Transverse colon (tissue), 4 donors: ENCODE measurements at regions of chr16 and their contacts with region 1.

Region 1: DNA sequence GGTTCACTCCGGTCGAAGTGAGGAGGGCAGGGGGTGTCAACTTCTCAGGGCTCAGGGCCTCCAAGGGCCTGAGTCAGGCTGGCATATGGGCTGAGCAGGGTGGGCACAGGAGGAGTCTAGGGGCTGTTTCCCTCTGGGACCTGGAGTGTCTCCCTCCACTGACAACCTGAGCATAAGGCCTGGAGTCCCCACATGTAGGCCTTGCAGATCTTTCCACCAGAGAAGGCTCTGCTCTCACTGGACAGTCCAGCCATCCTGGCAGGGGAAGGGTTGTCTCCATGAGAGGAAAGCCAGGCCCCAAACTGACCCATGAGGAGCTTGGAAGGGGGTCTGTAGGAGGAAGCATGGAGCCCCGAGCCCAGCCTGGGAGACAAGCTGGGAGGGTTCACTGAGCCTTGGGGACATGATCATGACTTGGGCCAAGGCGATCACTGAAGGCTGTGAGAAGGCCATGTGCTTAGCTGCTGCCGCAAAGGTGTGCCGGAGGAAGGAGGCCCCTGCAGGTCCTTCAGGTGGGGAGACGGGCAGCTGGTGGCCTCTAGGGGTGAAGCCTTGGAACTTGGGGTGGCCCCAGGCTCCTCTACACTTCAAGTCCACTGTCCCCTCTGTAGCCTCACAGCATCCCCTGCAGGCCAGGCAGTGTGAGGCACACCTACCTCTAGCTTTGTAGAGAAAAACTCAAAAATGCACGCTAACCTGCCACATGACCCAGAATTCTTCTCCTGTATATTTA is 9.9 kb downstream of the CMTM2 start:
- DNase-seq: peak; percentile 56
- H3K4me3 ChIP-seq: no peak overlapping the region
- H3K27ac ChIP-seq: no peak overlapping the region
- H3K4me1 ChIP-seq: no peaks in the 10 kb centered on the region
- H3K27me3 ChIP-seq: no peaks in the 10 kb centered on the region
- CTCF ChIP-seq: peak; percentile 35 to 56 (median 45)
- EP300 ChIP-seq: no peak
- POLR2A ChIP-seq: no peak

Region 2: DNA sequence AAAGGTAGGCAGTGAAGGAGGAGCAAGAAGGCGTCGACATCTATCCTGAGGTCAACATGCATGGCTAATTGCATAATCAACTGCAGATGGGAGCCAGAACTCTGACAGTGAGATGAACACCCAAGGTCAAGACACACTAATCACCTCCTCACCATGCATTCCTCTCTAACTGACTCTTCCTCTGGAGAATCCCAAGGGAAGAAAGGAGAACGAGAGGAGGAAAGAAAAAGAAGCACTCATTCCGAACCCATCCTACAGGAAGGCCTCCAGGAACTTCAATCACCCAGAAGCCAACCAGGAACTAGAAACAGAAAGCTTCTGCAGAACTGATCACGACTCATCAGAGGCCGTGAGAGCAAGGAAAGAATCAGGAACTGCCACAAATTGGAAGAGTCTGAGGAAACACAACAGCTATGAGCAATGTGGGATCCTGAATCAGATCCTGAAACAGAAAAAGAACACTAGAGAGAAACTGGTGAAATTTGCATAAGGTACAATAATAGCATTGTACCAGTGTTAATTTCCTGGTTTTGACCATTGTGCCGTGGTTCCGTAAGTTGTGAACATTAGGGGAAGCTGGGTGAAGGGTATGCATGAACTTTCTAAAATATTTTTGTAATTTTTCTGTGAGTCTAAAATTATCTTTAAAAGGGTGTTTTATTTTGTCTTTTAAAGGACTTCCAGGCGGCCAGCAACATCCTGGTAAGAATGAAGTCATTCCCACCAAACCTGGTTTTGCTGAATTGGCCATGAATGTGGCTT is 172.0 kb before region 1 on chr16:
- in situ Hi-C with region 1: loop called in 2 of 4 experiments (anchors 10 to 25 kb)
- intact Hi-C with region 1: no loop called
- DNase-seq: no peak
- H3K4me3 ChIP-seq: no peak overlapping the region
- H3K27ac ChIP-seq: no peak overlapping the region
- H3K4me1 ChIP-seq: no peaks in the 10 kb centered on the region
- H3K27me3 ChIP-seq: peaks cover 4% of the 10 kb centered on the region
- CTCF ChIP-seq: no peak
- EP300 ChIP-seq: no peak
- POLR2A ChIP-seq: no peak

Region 3: DNA sequence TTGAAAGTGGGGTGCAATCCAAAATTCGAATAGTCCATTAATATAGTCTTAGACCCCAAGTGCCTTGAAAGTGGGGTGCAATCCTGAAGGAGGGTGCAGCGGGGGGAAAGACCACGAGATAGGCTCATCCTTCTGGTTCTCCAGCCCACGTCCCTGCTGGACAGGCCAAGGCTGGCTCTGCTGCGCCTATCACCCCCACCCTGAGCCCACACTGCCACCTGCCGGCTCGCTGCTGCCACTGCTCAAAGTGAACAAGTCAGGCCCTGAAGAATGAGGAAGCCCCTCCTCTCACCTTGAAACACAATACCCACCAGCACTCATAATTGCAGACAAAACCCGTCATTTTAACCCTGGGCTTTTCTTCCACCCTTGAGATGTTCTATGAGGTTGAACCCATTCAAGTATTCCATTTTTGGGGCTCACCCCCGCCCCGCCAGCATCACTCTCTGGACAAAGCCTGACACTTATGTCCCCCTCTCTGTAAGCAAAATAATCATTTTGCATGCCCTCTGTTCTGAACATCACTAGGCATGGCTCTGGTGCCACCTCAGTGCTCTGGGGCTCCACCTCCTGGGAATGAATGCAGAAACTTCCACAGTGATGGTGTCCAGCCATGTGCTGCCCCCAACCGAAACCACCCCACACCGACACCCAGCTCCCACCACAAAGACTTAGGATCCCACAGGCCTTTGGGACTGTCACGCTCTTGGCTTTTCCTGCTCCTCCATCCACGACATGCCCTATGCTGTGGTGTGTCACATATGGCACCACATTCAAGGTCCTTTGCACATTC is 105.3 kb before region 1 on chr16:
- in situ Hi-C with region 1: loop called in 2 of 4 experiments (anchors 25 kb)
- intact Hi-C with region 1: no loop called
- DNase-seq: peak; percentile 78
- H3K4me3 ChIP-seq: no peak overlapping the region
- H3K27ac ChIP-seq: no peak overlapping the region
- H3K4me1 ChIP-seq: peaks cover 0 to 11% (median 8%) of the 10 kb centered on the region in 4 donors
- H3K27me3 ChIP-seq: no peaks in the 10 kb centered on the region
- CTCF ChIP-seq: peak; percentile 86 to 94 (median 92)
- EP300 ChIP-seq: no peak
- POLR2A ChIP-seq: no peak